Body of pancreas (tissue), 4 donors: ENCODE measurements at regions of chr12 and their contacts with region 1.

Region 1: DNA sequence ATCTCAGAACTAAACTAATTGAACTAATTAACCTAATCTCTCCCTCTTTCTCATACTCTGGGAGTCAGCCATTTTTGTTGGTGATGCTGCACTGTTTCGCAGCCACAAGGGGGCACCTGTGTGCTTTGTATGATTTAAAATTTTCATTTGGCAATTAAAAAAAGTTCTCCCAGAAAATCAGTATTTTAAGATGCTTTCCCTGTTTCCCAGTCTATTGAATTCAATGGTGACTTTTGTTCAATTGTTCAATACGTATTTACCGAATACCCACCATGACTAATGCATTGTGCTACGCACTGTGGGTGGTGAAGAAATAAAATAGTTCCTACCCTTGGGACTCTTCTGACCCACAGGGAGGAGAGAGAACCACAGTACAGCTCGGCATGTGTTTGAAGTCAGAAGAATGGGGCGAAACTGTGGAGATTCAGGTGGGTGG is 63.7 kb downstream of the ZNF664 start:
- DNase-seq: peak; percentile 43 to 60 (median 46)
- ATAC-seq: peak; percentile 58
- H3K4me3 ChIP-seq: no peak overlapping the region
- H3K27ac ChIP-seq: no peak overlapping the region
- H3K4me1 ChIP-seq: peaks cover 7% of the 10 kb centered on the region
- H3K27me3 ChIP-seq: no peaks in the 10 kb centered on the region
- CTCF ChIP-seq: peak; percentile 80 to 99 (median 91)
- POLR2A ChIP-seq: no peak

Region 2: GRCh38 chr12:123089631-123090353 is 946.9 kb before region 1 on chr12:
- intact Hi-C with region 1: no loop called
- DNase-seq: no peak
- ATAC-seq: no peak
- H3K4me3 ChIP-seq: no peak overlapping the region
- H3K27ac ChIP-seq: no peak overlapping the region
- H3K4me1 ChIP-seq: peaks cover 11% of the 10 kb centered on the region
- H3K27me3 ChIP-seq: no peaks in the 10 kb centered on the region
- CTCF ChIP-seq: no peak
- POLR2A ChIP-seq: no peak

Region 3: DNA sequence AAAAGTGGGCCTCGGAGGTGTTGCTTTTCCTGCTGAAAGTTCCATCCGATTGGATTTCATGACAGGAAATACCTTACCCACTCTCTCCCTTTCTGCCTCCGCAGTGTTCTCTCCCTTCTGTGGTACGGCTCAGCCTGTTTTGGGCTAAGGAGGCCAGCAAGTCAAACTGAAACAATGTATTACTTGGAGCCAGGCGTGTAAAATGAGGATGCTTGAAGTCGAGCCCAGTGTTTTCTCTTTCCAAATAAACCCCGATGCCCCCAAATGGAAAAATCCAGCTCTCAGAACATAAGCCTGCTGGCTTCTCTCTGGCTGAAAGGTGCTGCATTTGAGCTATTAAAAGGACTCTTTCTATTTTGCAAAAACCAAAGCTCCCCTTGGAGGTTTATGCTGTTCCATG is 61.0 kb after region 1 on chr12:
- intact Hi-C with region 1: no loop called
- DNase-seq: no peak
- ATAC-seq: no peak
- H3K4me3 ChIP-seq: no peak overlapping the region
- H3K27ac ChIP-seq: no peak overlapping the region
- H3K4me1 ChIP-seq: no peaks in the 10 kb centered on the region
- H3K27me3 ChIP-seq: no peaks in the 10 kb centered on the region
- CTCF ChIP-seq: no peak
- POLR2A ChIP-seq: no peak

Region 4: DNA sequence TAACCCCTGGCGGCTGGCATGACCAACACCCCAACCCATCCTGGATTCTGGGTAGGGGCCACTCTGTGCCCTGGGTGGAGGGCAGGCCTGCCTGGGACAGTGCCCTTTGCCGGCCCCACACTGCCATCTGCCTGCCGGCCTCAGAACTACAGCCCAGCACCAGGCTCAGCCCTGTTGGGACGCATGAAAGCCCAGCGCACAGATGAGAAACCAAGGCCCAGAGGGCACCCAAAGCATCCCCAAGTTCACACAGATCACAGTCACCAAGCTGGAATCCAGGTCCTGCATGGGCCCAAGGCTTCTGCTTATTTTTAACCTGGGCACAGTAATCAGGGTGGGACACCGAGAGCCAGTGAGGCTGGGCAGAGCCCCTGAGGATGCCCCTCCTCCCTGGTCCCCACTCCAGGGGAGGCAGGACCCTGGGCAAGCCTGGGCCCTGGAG is 284.4 kb after region 1 on chr12:
- intact Hi-C with region 1: loop called (anchors 5 kb)
- DNase-seq: peak; percentile 53 to 75 (median 70)
- ATAC-seq: peak; percentile 74
- H3K4me3 ChIP-seq: no peak overlapping the region
- H3K27ac ChIP-seq: no peak overlapping the region
- H3K4me1 ChIP-seq: no peaks in the 10 kb centered on the region
- H3K27me3 ChIP-seq: no peaks in the 10 kb centered on the region
- CTCF ChIP-seq: peak; percentile 72 to 87 (median 83)
- POLR2A ChIP-seq: no peak